HepG2 (cell line): ENCODE measurements at regions of chr1 and their contacts with region 1.

Region 1: DNA sequence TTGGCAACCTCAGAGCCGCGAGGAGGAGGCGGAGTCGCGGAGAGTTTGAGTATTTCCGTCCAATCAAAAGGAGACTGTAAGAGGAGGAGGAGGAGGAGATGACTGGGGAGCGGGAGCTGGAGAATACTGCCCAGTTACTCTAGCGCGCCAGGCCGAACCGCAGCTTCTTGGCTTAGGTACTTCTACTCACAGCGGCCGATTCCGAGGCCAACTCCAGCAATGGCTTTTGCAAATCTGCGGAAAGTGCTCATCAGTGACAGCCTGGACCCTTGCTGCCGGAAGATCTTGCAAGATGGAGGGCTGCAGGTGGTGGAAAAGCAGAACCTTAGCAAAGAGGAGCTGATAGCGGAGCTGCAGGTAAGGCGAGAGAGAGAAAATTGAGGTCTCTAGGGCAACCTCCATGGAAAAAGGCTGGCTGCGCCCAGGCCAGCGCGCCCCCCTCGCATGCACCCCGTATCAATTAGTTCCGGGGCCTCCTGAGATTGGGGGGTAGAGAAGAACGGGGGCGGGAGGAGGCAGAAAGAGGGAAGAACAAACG is at the start of gene PHGDH:
- DNase-seq: peak; percentile 76
- ATAC-seq: peak; percentile 82
- H3K4me3 ChIP-seq: peak within 1 kb of the TSS; percentile 67 to 94 (median 90)
- H3K27ac ChIP-seq: peak within 1 kb of the TSS; percentile 84
- H3K4me1 ChIP-seq: peaks cover 41% of the 10 kb centered on the region
- H3K27me3 ChIP-seq: peaks cover 0 to 5% of the 10 kb centered on the region in 2 experiments; a peak in 2 of 5 replicates
- CTCF ChIP-seq: no peak
- EP300 ChIP-seq: no peak
- POLR2A ChIP-seq: peak; percentile 94 to 96
- RAD21 ChIP-seq: no peak
- total RNA-seq, gene PHGDH: 133 and 163 TPM in 2 replicates

Region 2: GRCh38 chr1:119631433-119632102 is 80.3 kb before region 1 on chr1:
- CTCF ChIA-PET with region 1: no interaction called
- POLR2A ChIA-PET with region 1: interaction called, 4 read pairs
- in situ Hi-C with region 1: no loop called
- intact Hi-C with region 1: loop called (anchors 5 kb)
- DNase-seq: peak; percentile 88
- ATAC-seq: peak; percentile 94
- H3K4me3 ChIP-seq: peak overlapping the region; percentile 39 to 65 (median 43)
- H3K27ac ChIP-seq: peak overlapping the region; percentile 86
- H3K4me1 ChIP-seq: peaks cover 57% of the 10 kb centered on the region
- H3K27me3 ChIP-seq: no peaks in the 10 kb centered on the region
- CTCF ChIP-seq: 0 out of 2 replicates have a peak, but pooled peaks have one; percentile 5
- EP300 ChIP-seq: peak in 1 of 2 experiments; percentile 38; a peak in 1 of 4 replicates
- POLR2A ChIP-seq: peak; percentile 40 to 46; a peak in 3 of 4 replicates
- RAD21 ChIP-seq: 0 out of 2 replicates have a peak, but pooled peaks have one; percentile 30

Region 3: DNA sequence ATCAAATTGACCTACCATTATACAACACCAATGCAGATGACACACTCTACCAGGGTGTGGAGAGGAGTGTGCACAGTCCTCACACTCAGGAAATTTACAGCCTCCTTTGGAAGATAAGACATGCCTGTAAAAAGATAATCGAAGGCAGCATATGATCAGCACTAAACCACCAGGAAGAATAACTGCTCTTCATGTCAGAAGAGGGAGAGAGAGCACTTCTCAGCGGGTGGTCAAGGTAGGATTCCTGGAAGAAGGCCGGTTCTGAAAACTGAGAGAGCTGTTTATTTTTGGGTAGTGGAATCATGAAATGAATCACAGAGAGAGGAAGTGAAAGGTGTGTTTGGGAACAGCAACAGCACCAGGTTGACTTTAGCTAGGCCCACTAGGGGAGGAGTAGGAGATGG is 49.8 kb before region 1 on chr1:
- CTCF ChIA-PET with region 1: no interaction called
- POLR2A ChIA-PET with region 1: no interaction called
- in situ Hi-C with region 1: loop called (anchors 10 kb)
- intact Hi-C with region 1: no loop called
- DNase-seq: no peak
- ATAC-seq: no peak
- H3K4me3 ChIP-seq: no peak overlapping the region
- H3K27ac ChIP-seq: no peak overlapping the region
- H3K4me1 ChIP-seq: peaks cover 17% of the 10 kb centered on the region
- H3K27me3 ChIP-seq: no peaks in the 10 kb centered on the region
- CTCF ChIP-seq: no peak
- EP300 ChIP-seq: no peak
- POLR2A ChIP-seq: no peak
- RAD21 ChIP-seq: no peak

Region 4: GRCh38 chr1:119697598-119697997 is 14.3 kb before region 1 on chr1:
- CTCF ChIA-PET with region 1: no interaction called
- POLR2A ChIA-PET with region 1: interaction called, 35 read pairs
- in situ Hi-C with region 1: no loop called
- intact Hi-C with region 1: no loop called
- DNase-seq: no peak
- ATAC-seq: no peak; the same call in 2 of the 3 replicates
- H3K4me3 ChIP-seq: 0 out of 6 replicates have a peak overlapping the region, but pooled peaks of 1 of the 3 experiments have one; percentile 28
- H3K27ac ChIP-seq: no peak overlapping the region
- H3K4me1 ChIP-seq: peaks cover 19% of the 10 kb centered on the region
- H3K27me3 ChIP-seq: no peaks in the 10 kb centered on the region; a peak in 2 of 5 replicates
- CTCF ChIP-seq: no peak
- EP300 ChIP-seq: no peak
- POLR2A ChIP-seq: no peak
- RAD21 ChIP-seq: no peak

Region 5: GRCh38 chr1:119766374-119766794 is 54.5 kb after region 1 on chr1:
- CTCF ChIA-PET with region 1: no interaction called
- POLR2A ChIA-PET with region 1: interaction called, 28 read pairs
- in situ Hi-C with region 1: no loop called
- intact Hi-C with region 1: no loop called
- DNase-seq: peak; percentile 93
- ATAC-seq: peak; percentile 94
- H3K4me3 ChIP-seq: peak overlapping the region; percentile 20 to 41 (median 23); a peak in 4 of 6 replicates
- H3K27ac ChIP-seq: peak overlapping the region; percentile 75
- H3K4me1 ChIP-seq: peaks cover 73% of the 10 kb centered on the region
- H3K27me3 ChIP-seq: peaks cover 0 to 2% of the 10 kb centered on the region in 2 experiments; a peak in 1 of 5 replicates
- CTCF ChIP-seq: no peak
- EP300 ChIP-seq: peak; percentile 33 to 91; a peak in 3 of 4 replicates
- POLR2A ChIP-seq: 0 out of 4 replicates have a peak, but pooled peaks of 1 of the 2 experiments have one; percentile 37
- RAD21 ChIP-seq: no peak

Region 6: GRCh38 chr1:119954476-119955422 is 242.9 kb after region 1 on chr1:
- CTCF ChIA-PET with region 1: no interaction called
- POLR2A ChIA-PET with region 1: no interaction called
- in situ Hi-C with region 1: no loop called
- intact Hi-C with region 1: no loop called
- DNase-seq: no peak
- ATAC-seq: no peak
- H3K4me3 ChIP-seq: no peak overlapping the region
- H3K27ac ChIP-seq: no peak overlapping the region
- H3K4me1 ChIP-seq: peaks cover 31% of the 10 kb centered on the region
- H3K27me3 ChIP-seq: no peaks in the 10 kb centered on the region
- CTCF ChIP-seq: no peak
- EP300 ChIP-seq: no peak
- POLR2A ChIP-seq: no peak
- RAD21 ChIP-seq: no peak